ENCODE measurements at regions of chr4 and their contacts with region 1.

Region 1: GRCh38 chr4:184575306-184575705 is 73.9 kb downstream of the CASP3 start:
- DNase-seq: no peak
- ATAC-seq: peak; percentile 34
- H3K4me3 Mint-ChIP-seq: no peak overlapping the region
- H3K27ac Mint-ChIP-seq: no peak overlapping the region
- H3K4me1 Mint-ChIP-seq: no peaks in the 10 kb centered on the region
- H3K27me3 Mint-ChIP-seq: no peaks in the 10 kb centered on the region
- CTCF ChIP-seq: no peak

Region 2: GRCh38 chr4:184616633-184617551 is 41.6 kb after region 1 on chr4:
- CTCF ChIA-PET with region 1: no interaction called
- POLR2A ChIA-PET with region 1: no interaction called
- intact Hi-C with region 1: loop called (anchors 5 kb)
- DNase-seq: no peak
- ATAC-seq: peak; percentile 62
- H3K4me3 Mint-ChIP-seq: peak overlapping the region; percentile 44
- H3K27ac Mint-ChIP-seq: peak overlapping the region; percentile 38
- H3K4me1 Mint-ChIP-seq: peaks cover 24% of the 10 kb centered on the region
- H3K27me3 Mint-ChIP-seq: no peaks in the 10 kb centered on the region
- CTCF ChIP-seq: no peak

Measured in activated B cell treated with CpG ODN at 0.5 μM for 24 hours (primary cell).